ENCODE measurements at regions of chr19 and their contacts with region 1.

Region 1: GRCh38 chr19:17470068-17470841 is at the start of gene SLC27A1:
- DNase-seq: peak; percentile 98
- H3K4me3 ChIP-seq: peak within 1 kb of the TSS; percentile 91
- H3K4me3 Mint-ChIP-seq: peak within 1 kb of the TSS; percentile 87
- H3K27ac Mint-ChIP-seq: peak within 1 kb of the TSS; percentile 74
- H3K4me1 ChIP-seq: peaks cover 4% of the 10 kb centered on the region; the same call in 1 of the 2 replicates
- H3K4me1 Mint-ChIP-seq: peaks cover 9% of the 10 kb centered on the region
- H3K27me3 ChIP-seq: no peaks in the 10 kb centered on the region; the same call in 1 of the 2 replicates
- H3K27me3 Mint-ChIP-seq: no peaks in the 10 kb centered on the region
- CTCF ChIP-seq: no peak
- total RNA-seq, gene SLC27A1: 3.7 and 3.9 TPM in 2 replicates

Region 2: DNA sequence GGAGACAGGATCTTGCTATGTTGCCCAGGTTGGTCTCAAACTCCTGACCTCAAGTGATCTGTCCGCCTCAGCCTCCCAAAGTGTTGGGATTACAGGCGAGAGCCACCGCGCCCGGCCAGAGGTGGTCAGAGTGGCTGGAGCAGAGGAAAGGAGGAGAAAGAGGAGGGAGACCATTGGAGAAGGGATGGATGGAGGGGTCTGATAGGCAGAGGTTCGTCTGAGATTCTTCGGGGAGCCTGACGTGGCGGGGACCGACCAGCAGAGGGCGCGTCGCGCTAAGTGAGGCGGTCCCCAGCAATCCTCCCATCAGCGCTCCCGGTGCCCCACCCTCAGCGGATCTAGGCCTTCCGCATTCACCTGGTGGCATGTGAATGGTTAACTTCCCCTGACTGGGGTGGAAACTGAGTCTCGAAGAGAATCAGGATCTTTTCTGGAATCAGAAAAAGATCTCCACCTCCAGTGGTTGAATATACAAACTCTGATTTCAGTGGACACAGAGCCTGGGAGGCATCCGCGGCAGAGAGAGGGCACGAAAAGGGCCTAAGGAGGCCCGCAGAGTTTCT is 124.1 kb before region 1 on chr19:
- CTCF ChIA-PET with region 1: interaction called, 3 read pairs
- POLR2A ChIA-PET with region 1: no interaction called
- intact Hi-C with region 1: loop called (anchors 5 kb)
- DNase-seq: peak; percentile 65 to 83
- H3K4me3 ChIP-seq: no peak overlapping the region
- H3K4me3 Mint-ChIP-seq: no peak overlapping the region
- H3K27ac Mint-ChIP-seq: no peak overlapping the region
- H3K4me1 ChIP-seq: no peaks in the 10 kb centered on the region
- H3K4me1 Mint-ChIP-seq: no peaks in the 10 kb centered on the region
- H3K27me3 ChIP-seq: no peaks in the 10 kb centered on the region
- H3K27me3 Mint-ChIP-seq: peaks cover 6% of the 10 kb centered on the region
- CTCF ChIP-seq: peak; percentile 90 to 91

Region 3: GRCh38 chr19:17390665-17391370 is 79.4 kb before region 1 on chr19:
- CTCF ChIA-PET with region 1: no interaction called
- POLR2A ChIA-PET with region 1: no interaction called
- intact Hi-C with region 1: loop called (anchors 1 kb)
- DNase-seq: peak; percentile 93 to 95
- H3K4me3 ChIP-seq: peak overlapping the region; percentile 48
- H3K4me3 Mint-ChIP-seq: peak overlapping the region; percentile 78
- H3K27ac Mint-ChIP-seq: peak overlapping the region; percentile 32
- H3K4me1 ChIP-seq: 0 out of 2 replicates have a peak, but pooled peaks cover 5% of the 10 kb centered on the region
- H3K4me1 Mint-ChIP-seq: peaks cover 6% of the 10 kb centered on the region
- H3K27me3 ChIP-seq: no peaks in the 10 kb centered on the region
- H3K27me3 Mint-ChIP-seq: peaks cover 3% of the 10 kb centered on the region
- CTCF ChIP-seq: peak; percentile 62 to 68

Region 4: GRCh38 chr19:17441241-17442021 is 28.8 kb before region 1 on chr19:
- CTCF ChIA-PET with region 1: interaction called, 3 read pairs
- POLR2A ChIA-PET with region 1: no interaction called
- intact Hi-C with region 1: loop called (anchors 1 kb)
- DNase-seq: peak in 1 of 2 experiments; percentile 45
- H3K4me3 ChIP-seq: no peak overlapping the region
- H3K4me3 Mint-ChIP-seq: no peak overlapping the region
- H3K27ac Mint-ChIP-seq: no peak overlapping the region
- H3K4me1 ChIP-seq: no peaks in the 10 kb centered on the region
- H3K4me1 Mint-ChIP-seq: no peaks in the 10 kb centered on the region
- H3K27me3 ChIP-seq: no peaks in the 10 kb centered on the region
- H3K27me3 Mint-ChIP-seq: no peaks in the 10 kb centered on the region
- CTCF ChIP-seq: peak; percentile 44 to 49

Region 5: GRCh38 chr19:17448131-17448967 is 21.9 kb before region 1 on chr19 and contains the start of gene TMEM221:
- CTCF ChIA-PET with region 1: interaction called, 5 read pairs
- POLR2A ChIA-PET with region 1: no interaction called
- intact Hi-C with region 1: loop called (anchors 1 kb)
- DNase-seq: peak; percentile 46 to 69
- H3K4me3 ChIP-seq: peak within 1 kb of the TSS; percentile 47
- H3K4me3 Mint-ChIP-seq: peak within 1 kb of the TSS; percentile 58
- H3K27ac Mint-ChIP-seq: no peak within 1 kb of the TSS
- H3K4me1 ChIP-seq: no peaks in the 10 kb centered on the region
- H3K4me1 Mint-ChIP-seq: no peaks in the 10 kb centered on the region
- H3K27me3 ChIP-seq: no peaks in the 10 kb centered on the region
- H3K27me3 Mint-ChIP-seq: no peaks in the 10 kb centered on the region
- CTCF ChIP-seq: peak; percentile 45 to 61
- total RNA-seq, gene TMEM221: 0.37 TPM in 1 of 2 replicates, not detected in the other

Region 6: GRCh38 chr19:17511724-17512573 is 41.7 kb after region 1 on chr19:
- CTCF ChIA-PET with region 1: interaction called, 3 read pairs
- POLR2A ChIA-PET with region 1: no interaction called
- intact Hi-C with region 1: loop called (anchors 1 kb)
- DNase-seq: peak; percentile 72 to 73
- H3K4me3 ChIP-seq: peak overlapping the region; percentile 77
- H3K4me3 Mint-ChIP-seq: peak overlapping the region; percentile 85
- H3K27ac Mint-ChIP-seq: peak overlapping the region; percentile 91
- H3K4me1 ChIP-seq: peaks cover 8% of the 10 kb centered on the region
- H3K4me1 Mint-ChIP-seq: peaks cover 5% of the 10 kb centered on the region
- H3K27me3 ChIP-seq: no peaks in the 10 kb centered on the region
- H3K27me3 Mint-ChIP-seq: no peaks in the 10 kb centered on the region
- CTCF ChIP-seq: peak in 1 of 2 experiments; percentile 26

Region 7: DNA sequence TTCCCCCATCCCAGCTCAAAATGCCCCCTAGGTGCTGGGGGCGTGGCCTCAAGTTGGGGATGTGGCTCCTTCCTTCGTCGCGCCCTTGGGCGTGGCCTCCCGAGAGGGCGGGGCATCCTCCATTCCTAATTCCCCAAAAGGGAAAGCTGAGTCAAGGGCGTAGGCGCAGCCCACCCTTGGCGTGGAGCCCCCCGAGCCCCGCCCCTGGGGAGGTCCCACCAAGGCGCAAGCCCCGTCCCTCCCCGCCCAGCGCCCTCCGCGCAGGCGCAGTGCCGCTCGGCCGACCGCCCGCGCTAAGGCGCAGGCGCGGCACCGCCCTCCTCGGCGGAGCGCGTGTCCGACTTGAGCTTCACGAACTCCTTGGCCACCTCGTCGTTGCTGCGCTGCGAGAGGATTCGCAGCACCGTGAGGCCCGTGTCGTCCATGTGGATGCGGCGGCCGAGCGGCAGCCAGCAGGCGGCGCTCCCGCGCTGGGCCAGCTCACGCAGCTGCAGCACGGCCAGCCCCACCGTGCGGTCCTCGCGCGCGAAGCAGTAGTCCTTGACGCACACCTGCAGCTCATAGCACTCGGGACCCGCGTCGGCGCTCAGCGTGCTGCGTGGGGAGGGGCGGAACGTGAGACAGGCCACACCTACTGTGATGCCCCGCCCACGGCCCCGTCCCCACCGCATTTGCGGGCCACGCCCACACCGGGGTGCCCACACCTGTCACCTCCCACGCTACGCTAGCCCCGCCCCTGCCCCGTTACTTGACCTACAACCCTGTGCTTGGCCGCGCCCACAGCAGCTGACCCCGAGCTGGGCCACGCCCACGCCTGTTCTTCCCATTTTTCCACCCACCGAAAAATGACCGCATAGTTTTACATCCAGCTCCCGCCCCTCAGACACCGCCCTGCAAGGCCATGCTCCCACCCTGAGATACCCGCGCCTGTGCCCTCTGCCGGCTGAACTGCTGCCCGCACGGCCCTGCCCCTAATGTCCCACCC is 135.8 kb after region 1 on chr19:
- CTCF ChIA-PET with region 1: interaction called, 4 read pairs
- POLR2A ChIA-PET with region 1: no interaction called
- intact Hi-C with region 1: loop called (anchors 2 kb)
- DNase-seq: peak; percentile 95
- H3K4me3 ChIP-seq: peak overlapping the region; percentile 65
- H3K4me3 Mint-ChIP-seq: peak overlapping the region; percentile 73
- H3K27ac Mint-ChIP-seq: peak overlapping the region; percentile 81
- H3K4me1 ChIP-seq: no peaks in the 10 kb centered on the region
- H3K4me1 Mint-ChIP-seq: peaks cover 6% of the 10 kb centered on the region
- H3K27me3 ChIP-seq: no peaks in the 10 kb centered on the region
- H3K27me3 Mint-ChIP-seq: no peaks in the 10 kb centered on the region
- CTCF ChIP-seq: peak; percentile 52 to 66

Measured in Caco-2 (cell line).